T-cell (primary cell): ENCODE measurements at regions of chr1 and their contacts with region 1.

Region 1: GRCh38 chr1:200015811-200016210 is 11.7 kb upstream of the NR5A2 start:
- DNase-seq: no peak
- ATAC-seq: no peak
- H3K4me3 ChIP-seq: no peak overlapping the region
- H3K4me3 Mint-ChIP-seq: no peak overlapping the region
- H3K27ac ChIP-seq: no peak overlapping the region
- H3K27ac Mint-ChIP-seq: no peak overlapping the region
- H3K4me1 ChIP-seq: no peaks in the 10 kb centered on the region
- H3K4me1 Mint-ChIP-seq: no peaks in the 10 kb centered on the region
- H3K27me3 ChIP-seq: peaks cover 0 to 9% of the 10 kb centered on the region in 2 experiments
- H3K27me3 Mint-ChIP-seq: peaks cover 4 to 26% of the 10 kb centered on the region in 2 donors

Region 2: DNA sequence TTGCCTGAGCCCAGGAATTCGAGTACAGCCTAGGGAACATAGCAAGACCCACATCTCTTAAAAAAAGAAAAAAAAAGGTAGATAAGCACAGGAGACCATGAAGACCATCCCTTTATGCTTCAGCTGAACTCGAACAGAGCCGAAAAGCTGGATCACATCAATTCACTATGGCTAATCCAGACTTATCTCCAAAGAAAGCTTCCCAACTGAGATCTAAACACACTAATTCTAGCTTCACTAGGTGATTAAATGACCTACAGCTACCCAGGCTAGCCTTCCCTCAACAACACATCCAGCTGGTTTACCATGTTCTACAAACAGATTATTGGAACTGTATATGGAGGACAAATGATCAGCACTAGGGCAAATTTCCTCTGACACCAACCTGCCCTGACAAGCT is 32.3 kb before region 1 on chr1:
- CTCF ChIA-PET with region 1: interaction called in 1 of 2 experiments, 10 read pairs
- POLR2A ChIA-PET with region 1: no interaction called
- DNase-seq: no peak
- ATAC-seq: no peak
- H3K4me3 ChIP-seq: no peak overlapping the region
- H3K4me3 Mint-ChIP-seq: no peak overlapping the region
- H3K27ac ChIP-seq: no peak overlapping the region
- H3K27ac Mint-ChIP-seq: no peak overlapping the region
- H3K4me1 ChIP-seq: no peaks in the 10 kb centered on the region
- H3K4me1 Mint-ChIP-seq: no peaks in the 10 kb centered on the region
- H3K27me3 ChIP-seq: peaks cover 0 to 7% of the 10 kb centered on the region in 2 experiments
- H3K27me3 Mint-ChIP-seq: peaks cover 0 to 2% of the 10 kb centered on the region in 2 donors

Region 3: GRCh38 chr1:200279810-200280411 is 264.1 kb after region 1 on chr1:
- CTCF ChIA-PET with region 1: interaction called in 1 of 2 experiments, 12 read pairs
- POLR2A ChIA-PET with region 1: no interaction called
- DNase-seq: peak in 10 of 35 experiments; percentile 6 to 52 (median 13)
- ATAC-seq: no peak
- H3K4me3 ChIP-seq: no peak overlapping the region
- H3K4me3 Mint-ChIP-seq: no peak overlapping the region
- H3K27ac ChIP-seq: no peak overlapping the region
- H3K27ac Mint-ChIP-seq: no peak overlapping the region
- H3K4me1 ChIP-seq: no peaks in the 10 kb centered on the region
- H3K4me1 Mint-ChIP-seq: no peaks in the 10 kb centered on the region
- H3K27me3 ChIP-seq: peaks cover 0 to 5% of the 10 kb centered on the region in 2 experiments
- H3K27me3 Mint-ChIP-seq: peaks cover 1 to 6% of the 10 kb centered on the region in 2 donors